ENCODE measurements at regions of chr10 and their contacts with region 1.

Region 1: DNA sequence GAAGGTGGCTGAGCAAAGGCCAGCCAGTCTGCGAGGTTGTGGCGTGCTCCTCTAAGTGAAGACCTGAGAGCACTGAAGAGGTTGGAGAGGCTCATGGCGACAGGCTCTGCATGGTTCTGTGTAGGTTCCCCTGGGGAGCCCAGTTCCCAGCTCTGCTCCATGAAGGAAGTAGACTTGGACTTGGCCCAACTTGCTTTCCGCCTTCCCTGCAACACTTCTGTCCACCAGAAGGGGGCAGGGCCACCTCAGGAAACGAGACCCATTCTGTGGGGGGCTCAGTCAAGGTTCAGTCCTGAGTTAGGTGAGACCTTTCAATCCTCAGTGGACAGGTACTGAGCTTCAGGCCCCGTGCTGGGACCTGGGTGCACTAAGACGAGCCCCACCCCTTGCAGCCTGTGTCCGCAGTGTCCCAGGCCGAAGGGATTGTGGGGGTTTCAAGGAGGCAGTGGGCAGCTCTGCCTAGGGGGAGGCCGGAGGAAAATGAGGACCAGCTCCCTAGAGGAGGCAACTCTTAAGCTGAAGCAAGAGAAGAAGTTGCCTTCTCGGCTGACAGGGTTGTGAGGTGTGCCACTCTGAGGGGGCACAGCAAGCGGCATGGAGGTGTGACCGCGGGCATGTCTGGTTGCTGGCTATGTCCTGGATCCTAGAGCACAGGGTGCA is 15.0 kb upstream of the PCBD1 start:
- DNase-seq: peak; percentile 4
- H3K4me3 ChIP-seq: no peak overlapping the region
- H3K27ac ChIP-seq: no peak overlapping the region
- H3K27me3 ChIP-seq: peaks cover 67% of the 10 kb centered on the region
- CTCF ChIP-seq: peak; percentile 91

Region 2: DNA sequence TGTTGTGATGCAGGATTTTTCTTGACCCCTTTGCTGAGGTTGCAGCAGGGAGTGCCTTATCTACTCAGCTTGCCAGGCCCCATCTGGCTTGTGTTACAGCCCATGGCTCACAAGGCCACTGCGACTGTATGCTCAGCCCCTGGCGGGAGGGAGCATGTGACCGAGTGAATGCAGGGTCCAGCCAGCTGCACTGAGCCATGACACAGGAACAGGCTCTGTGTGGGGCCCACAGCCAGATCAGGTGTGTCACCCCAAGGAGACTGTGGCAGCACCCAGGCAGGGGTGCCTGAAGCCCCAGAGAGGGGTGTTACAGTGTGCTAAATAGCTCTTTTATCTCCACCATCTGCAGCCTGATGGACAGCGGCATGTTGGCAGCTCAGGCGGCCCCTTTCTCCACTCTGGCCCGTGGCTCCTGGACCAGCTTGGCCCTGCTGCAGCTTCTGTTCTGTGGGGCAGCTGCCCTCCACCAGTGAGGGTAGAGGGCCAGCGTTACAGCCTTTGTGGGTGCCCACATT is 12.4 kb before region 1 on chr10:
- CTCF ChIA-PET with region 1: interaction called, 15 read pairs
- POLR2A ChIA-PET with region 1: no interaction called
- DNase-seq: no peak
- H3K4me3 ChIP-seq: no peak overlapping the region
- H3K27ac ChIP-seq: no peak overlapping the region
- H3K27me3 ChIP-seq: no peaks in the 10 kb centered on the region
- CTCF ChIP-seq: no peak

Region 3: DNA sequence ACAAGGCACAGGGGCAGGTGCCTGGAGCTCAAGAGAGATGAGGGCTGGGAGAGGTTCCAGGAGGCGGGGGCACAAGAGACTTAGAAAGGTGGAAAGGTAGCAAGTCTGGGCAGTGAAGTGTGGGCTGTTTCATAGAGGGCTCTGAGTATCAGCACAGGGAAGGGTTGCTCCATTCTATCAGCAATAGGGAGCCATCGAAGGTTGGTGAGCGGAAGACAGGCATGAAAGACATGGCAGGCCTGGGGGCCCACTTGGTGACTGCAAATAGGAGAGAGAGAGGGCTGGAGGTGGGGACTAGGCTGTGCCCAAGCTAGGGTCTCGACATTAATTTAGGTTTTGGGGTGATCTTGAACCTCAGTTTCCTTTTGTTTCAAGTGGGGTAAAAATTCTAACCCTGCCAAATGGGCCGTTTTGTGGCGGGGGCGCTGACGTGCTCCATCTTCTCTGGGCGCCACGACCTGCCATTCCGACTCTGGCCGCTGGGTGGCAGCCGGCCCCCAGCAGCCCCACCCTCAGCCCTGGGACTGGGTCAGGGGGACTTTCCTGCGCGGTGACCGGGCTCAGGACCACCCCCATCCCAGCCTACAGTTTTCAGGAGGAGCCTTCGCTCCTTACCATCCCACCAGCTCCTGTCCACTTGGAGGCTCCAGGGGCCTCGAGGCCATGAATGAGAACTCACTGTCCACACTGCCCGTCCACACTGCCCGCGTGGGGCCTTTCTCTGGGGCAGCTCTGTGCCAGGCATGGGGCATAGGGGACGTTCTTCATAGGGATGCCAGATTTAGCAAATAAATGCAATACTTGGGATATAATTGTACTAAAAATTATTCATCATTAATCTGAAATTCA is 22.2 kb after region 1 on chr10:
- CTCF ChIA-PET with region 1: interaction called, 16 read pairs
- POLR2A ChIA-PET with region 1: interaction called, 4 read pairs
- DNase-seq: no peak
- H3K4me3 ChIP-seq: no peak overlapping the region
- H3K27ac ChIP-seq: no peak overlapping the region
- H3K27me3 ChIP-seq: peaks cover 34% of the 10 kb centered on the region
- CTCF ChIP-seq: peak; percentile 91

Region 4: GRCh38 chr10:71285180-71285545 is 381.8 kb after region 1 on chr10:
- CTCF ChIA-PET with region 1: interaction called, 33 read pairs
- POLR2A ChIA-PET with region 1: no interaction called
- DNase-seq: no peak
- H3K4me3 ChIP-seq: no peak overlapping the region
- H3K27ac ChIP-seq: no peak overlapping the region
- H3K27me3 ChIP-seq: no peaks in the 10 kb centered on the region
- CTCF ChIP-seq: peak; percentile 79